Activated B cell treated with CpG ODN at 0.5 μM for 24 hours (primary cell): ENCODE measurements at regions of chr6 and their contacts with region 1.

Region 1: GRCh38 chr6:63635588-63636517 is at the start of gene PHF3:
- DNase-seq: peak; percentile 89
- ATAC-seq: peak; percentile 88
- H3K4me3 Mint-ChIP-seq: peak within 1 kb of the TSS; percentile 95
- H3K27ac Mint-ChIP-seq: peak within 1 kb of the TSS; percentile 94
- H3K4me1 Mint-ChIP-seq: peaks cover 46% of the 10 kb centered on the region
- H3K27me3 Mint-ChIP-seq: no peaks in the 10 kb centered on the region
- CTCF ChIP-seq: no peak
- total RNA-seq, gene PHF3: 52.4 and 56.7 TPM in 2 replicates

Region 2: DNA sequence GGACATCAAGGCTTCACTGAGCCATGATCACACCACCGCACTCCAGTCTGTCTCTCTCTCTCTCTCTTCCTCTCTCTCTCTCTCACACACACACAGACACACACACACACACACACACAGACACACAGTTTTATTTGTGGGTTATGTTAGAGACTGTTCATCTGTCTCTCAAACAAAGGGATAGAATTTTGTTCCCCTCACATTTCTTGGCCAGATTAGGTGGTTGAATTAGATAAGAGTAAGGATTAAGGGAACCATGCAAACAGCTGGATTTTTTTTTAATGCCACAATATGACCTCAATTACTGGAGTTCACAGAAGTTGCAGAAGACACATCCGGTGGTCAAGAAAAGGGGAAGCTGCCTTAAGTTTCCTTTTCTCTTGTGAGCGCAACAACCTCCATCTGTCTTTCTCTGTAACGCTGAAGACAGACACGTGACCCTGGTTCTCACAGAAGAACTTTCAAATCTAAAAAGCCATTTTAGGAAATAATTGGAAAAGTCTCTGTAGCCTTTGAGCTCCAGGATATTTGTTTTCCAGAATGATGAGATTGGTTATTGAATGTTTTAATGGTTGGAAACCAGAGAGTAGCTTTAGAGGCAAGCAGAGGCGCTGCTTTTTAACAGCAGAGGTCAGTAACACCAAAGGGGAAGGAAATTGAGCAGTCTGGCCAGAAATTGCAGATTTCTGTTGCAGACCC is 283.1 kb before region 1 on chr6:
- CTCF ChIA-PET with region 1: no interaction called
- POLR2A ChIA-PET with region 1: no interaction called
- intact Hi-C with region 1: loop called (anchors 2 kb)
- DNase-seq: no peak
- ATAC-seq: peak; percentile 77
- H3K4me3 Mint-ChIP-seq: peak overlapping the region; percentile 69
- H3K27ac Mint-ChIP-seq: peak overlapping the region; percentile 63
- H3K4me1 Mint-ChIP-seq: peaks cover 22% of the 10 kb centered on the region
- H3K27me3 Mint-ChIP-seq: no peaks in the 10 kb centered on the region
- CTCF ChIP-seq: no peak

Region 3: DNA sequence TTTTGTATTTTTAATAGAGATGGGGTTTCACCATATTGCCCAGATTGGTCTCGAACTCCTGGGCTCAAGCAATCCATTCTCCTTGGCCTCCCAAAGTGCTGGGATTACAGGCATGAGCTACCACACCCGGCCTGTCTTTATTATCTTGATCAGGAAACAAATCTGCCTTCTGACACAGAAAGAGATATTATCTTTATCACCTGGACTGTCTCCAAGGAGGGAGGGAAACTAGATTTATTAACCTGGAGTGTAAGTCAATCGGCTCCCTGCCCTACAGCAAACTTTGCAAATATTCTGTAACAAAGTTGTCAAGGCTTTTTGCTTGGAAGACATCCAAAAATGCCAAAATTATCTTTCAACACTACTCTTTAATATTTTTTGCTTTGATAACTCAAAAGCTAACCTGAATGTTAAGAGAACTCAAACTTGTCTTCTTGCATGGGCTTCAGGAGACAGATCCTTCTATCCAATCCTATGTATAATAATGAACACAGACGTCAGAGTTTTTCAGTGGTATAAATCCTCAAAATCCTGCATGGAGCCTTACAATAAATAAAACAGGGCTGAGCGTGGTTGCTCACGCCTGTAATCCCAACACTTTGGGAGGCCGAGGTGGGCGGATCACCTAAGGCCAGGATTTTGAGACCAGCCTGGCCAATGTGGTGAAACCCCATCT is 148.6 kb before region 1 on chr6:
- CTCF ChIA-PET with region 1: no interaction called
- POLR2A ChIA-PET with region 1: no interaction called
- intact Hi-C with region 1: no loop called
- DNase-seq: no peak
- ATAC-seq: no peak
- H3K4me3 Mint-ChIP-seq: no peak overlapping the region
- H3K27ac Mint-ChIP-seq: no peak overlapping the region
- H3K4me1 Mint-ChIP-seq: no peaks in the 10 kb centered on the region
- H3K27me3 Mint-ChIP-seq: peaks cover 4% of the 10 kb centered on the region
- CTCF ChIP-seq: no peak

Region 4: GRCh38 chr6:63649269-63649668 is 13.4 kb after region 1 on chr6:
- CTCF ChIA-PET with region 1: interaction called, 3 read pairs
- POLR2A ChIA-PET with region 1: interaction called, 5 read pairs
- intact Hi-C with region 1: loop called (anchors 1 kb)
- DNase-seq: no peak
- ATAC-seq: no peak
- H3K4me3 Mint-ChIP-seq: no peak overlapping the region
- H3K27ac Mint-ChIP-seq: no peak overlapping the region
- H3K4me1 Mint-ChIP-seq: peaks cover 69% of the 10 kb centered on the region
- H3K27me3 Mint-ChIP-seq: no peaks in the 10 kb centered on the region
- CTCF ChIP-seq: no peak

Region 5: GRCh38 chr6:63685446-63686379 is 49.9 kb after region 1 on chr6:
- CTCF ChIA-PET with region 1: interaction called, 5 read pairs
- POLR2A ChIA-PET with region 1: interaction called, 8 read pairs
- intact Hi-C with region 1: loop called (anchors 1 kb)
- DNase-seq: no peak
- ATAC-seq: peak; percentile 89
- H3K4me3 Mint-ChIP-seq: peak overlapping the region; percentile 13
- H3K27ac Mint-ChIP-seq: peak overlapping the region; percentile 77
- H3K4me1 Mint-ChIP-seq: peaks cover 45% of the 10 kb centered on the region
- H3K27me3 Mint-ChIP-seq: no peaks in the 10 kb centered on the region
- CTCF ChIP-seq: no peak

Region 6: GRCh38 chr6:64012351-64013001 is 376.6 kb after region 1 on chr6:
- CTCF ChIA-PET with region 1: no interaction called
- POLR2A ChIA-PET with region 1: no interaction called
- intact Hi-C with region 1: no loop called
- DNase-seq: no peak
- ATAC-seq: no peak
- H3K4me3 Mint-ChIP-seq: no peak overlapping the region
- H3K27ac Mint-ChIP-seq: no peak overlapping the region
- H3K4me1 Mint-ChIP-seq: no peaks in the 10 kb centered on the region
- H3K27me3 Mint-ChIP-seq: no peaks in the 10 kb centered on the region
- CTCF ChIP-seq: no peak

Region 7: DNA sequence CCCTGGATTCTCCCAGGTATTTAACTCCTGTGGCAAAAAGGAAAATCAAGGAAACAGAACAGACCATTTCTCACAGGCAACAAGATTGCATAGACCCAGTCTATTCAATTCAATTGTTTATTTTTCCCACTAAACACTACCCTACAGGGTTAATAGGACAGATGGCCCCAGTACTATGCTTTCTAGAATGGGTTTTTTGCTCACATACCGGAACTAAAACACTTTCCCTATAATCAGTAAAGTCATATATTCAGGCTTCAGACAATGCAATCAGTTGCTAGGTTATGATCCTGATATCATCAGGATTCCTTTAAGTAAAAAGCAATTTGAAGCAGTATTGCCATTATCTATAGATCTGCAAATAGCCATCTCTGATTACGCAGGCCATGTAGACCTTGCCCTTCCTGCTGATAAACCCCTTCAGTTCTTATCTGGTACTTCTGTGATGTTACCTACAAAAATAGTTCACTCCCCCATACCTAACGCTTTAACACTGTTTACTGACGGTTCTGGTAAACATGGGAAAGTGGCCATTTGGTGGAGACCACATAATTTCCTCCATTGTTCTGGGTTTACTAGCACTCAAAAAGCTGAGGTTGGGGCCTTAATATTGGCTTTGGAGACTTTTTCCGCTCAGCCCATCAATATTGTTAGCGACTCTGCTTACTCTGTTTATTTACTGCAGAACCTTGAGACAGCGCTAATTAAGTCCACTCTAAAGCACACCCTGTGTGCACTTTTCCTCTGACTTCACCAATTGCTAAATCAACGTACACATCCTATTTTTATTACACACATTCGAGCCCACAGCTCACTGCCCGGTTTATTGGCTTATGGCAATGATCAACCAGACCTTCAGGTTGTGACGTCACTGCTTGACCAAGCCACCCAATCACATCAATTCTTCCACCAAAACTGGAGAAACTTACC is 665.7 kb after region 1 on chr6:
- CTCF ChIA-PET with region 1: no interaction called
- POLR2A ChIA-PET with region 1: no interaction called
- intact Hi-C with region 1: no loop called
- DNase-seq: no peak
- ATAC-seq: no peak
- H3K4me3 Mint-ChIP-seq: no peak overlapping the region
- H3K27ac Mint-ChIP-seq: no peak overlapping the region
- H3K4me1 Mint-ChIP-seq: no peaks in the 10 kb centered on the region
- H3K27me3 Mint-ChIP-seq: no peaks in the 10 kb centered on the region
- CTCF ChIP-seq: no peak